CD4-positive, alpha-beta T cell (primary cell): ENCODE measurements at regions of chr6 and their contacts with region 1.

Region 1: GRCh38 chr6:116279260-116280063 is at the start of gene TSPYL1:
- DNase-seq: peak; percentile 89 to 98 (median 92)
- ATAC-seq: peak; percentile 84
- H3K4me3 ChIP-seq: peak within 1 kb of the TSS; percentile 76
- H3K4me3 Mint-ChIP-seq: peak within 1 kb of the TSS; percentile 96
- H3K27ac ChIP-seq: peak within 1 kb of the TSS; percentile 97 to 99
- H3K27ac Mint-ChIP-seq: peak within 1 kb of the TSS; percentile 95
- H3K4me1 ChIP-seq: peaks cover 41% of the 10 kb centered on the region
- H3K4me1 Mint-ChIP-seq: peaks cover 69% of the 10 kb centered on the region
- H3K27me3 ChIP-seq: no peaks in the 10 kb centered on the region
- H3K27me3 Mint-ChIP-seq: no peaks in the 10 kb centered on the region
- CTCF ChIP-seq: no peak
- total RNA-seq, gene TSPYL1: 225 to 226 TPM

Region 2: DNA sequence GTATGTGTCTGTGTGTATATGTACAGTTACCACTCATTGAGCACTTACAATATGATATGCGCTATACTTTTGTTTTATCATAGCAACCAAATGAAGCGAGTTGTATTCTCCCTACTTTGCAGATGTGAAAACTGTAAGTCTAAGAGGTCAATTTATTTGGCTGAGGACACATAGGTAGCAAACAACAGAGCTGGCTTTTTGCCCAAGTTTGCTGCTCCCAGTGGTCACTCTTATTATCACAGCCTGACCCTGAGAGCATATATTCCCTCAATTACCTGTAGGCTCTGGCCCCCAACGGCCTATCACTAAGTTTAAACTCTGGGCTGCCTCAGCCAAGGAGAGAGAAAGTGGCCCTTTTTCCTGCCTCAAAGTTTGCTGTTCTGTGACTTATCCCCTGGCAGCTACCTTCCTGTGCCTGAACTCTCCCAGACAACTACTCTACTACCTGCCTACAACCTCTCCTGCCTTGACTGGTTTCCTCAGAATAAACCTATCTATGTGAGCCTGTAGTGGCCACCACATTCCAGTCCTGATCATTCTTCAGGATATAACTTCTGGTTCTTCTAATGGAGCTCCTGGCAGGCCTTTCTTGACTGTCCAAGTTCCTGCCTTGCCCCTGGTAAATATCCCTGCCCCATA is 440.6 kb before region 1 on chr6:
- CTCF ChIA-PET with region 1: no interaction called
- POLR2A ChIA-PET with region 1: no interaction called
- intact Hi-C with region 1: no loop called
- DNase-seq: no peak
- ATAC-seq: no peak
- H3K4me3 ChIP-seq: no peak overlapping the region
- H3K4me3 Mint-ChIP-seq: no peak overlapping the region
- H3K27ac ChIP-seq: no peak overlapping the region
- H3K27ac Mint-ChIP-seq: no peak overlapping the region
- H3K4me1 ChIP-seq: no peaks in the 10 kb centered on the region
- H3K4me1 Mint-ChIP-seq: no peaks in the 10 kb centered on the region
- H3K27me3 ChIP-seq: no peaks in the 10 kb centered on the region
- H3K27me3 Mint-ChIP-seq: no peaks in the 10 kb centered on the region
- CTCF ChIP-seq: no peak

Region 3: GRCh38 chr6:116100419-116101301 is 178.8 kb before region 1 on chr6 and contains the start of gene NT5DC1:
- CTCF ChIA-PET with region 1: no interaction called
- POLR2A ChIA-PET with region 1: interaction called, 27 read pairs
- intact Hi-C with region 1: no loop called
- DNase-seq: peak; percentile 65 to 92 (median 82)
- ATAC-seq: peak; percentile 92
- H3K4me3 ChIP-seq: peak within 1 kb of the TSS; percentile 67
- H3K4me3 Mint-ChIP-seq: peak within 1 kb of the TSS; percentile 99
- H3K27ac ChIP-seq: peak within 1 kb of the TSS; percentile 69 to 75
- H3K27ac Mint-ChIP-seq: peak within 1 kb of the TSS; percentile 80
- H3K4me1 ChIP-seq: peaks cover 26% of the 10 kb centered on the region
- H3K4me1 Mint-ChIP-seq: peaks cover 58% of the 10 kb centered on the region
- H3K27me3 ChIP-seq: no peaks in the 10 kb centered on the region
- H3K27me3 Mint-ChIP-seq: no peaks in the 10 kb centered on the region
- CTCF ChIP-seq: peak; percentile 52
- total RNA-seq, gene NT5DC1: 24.2 to 27.2 TPM

Region 4: DNA sequence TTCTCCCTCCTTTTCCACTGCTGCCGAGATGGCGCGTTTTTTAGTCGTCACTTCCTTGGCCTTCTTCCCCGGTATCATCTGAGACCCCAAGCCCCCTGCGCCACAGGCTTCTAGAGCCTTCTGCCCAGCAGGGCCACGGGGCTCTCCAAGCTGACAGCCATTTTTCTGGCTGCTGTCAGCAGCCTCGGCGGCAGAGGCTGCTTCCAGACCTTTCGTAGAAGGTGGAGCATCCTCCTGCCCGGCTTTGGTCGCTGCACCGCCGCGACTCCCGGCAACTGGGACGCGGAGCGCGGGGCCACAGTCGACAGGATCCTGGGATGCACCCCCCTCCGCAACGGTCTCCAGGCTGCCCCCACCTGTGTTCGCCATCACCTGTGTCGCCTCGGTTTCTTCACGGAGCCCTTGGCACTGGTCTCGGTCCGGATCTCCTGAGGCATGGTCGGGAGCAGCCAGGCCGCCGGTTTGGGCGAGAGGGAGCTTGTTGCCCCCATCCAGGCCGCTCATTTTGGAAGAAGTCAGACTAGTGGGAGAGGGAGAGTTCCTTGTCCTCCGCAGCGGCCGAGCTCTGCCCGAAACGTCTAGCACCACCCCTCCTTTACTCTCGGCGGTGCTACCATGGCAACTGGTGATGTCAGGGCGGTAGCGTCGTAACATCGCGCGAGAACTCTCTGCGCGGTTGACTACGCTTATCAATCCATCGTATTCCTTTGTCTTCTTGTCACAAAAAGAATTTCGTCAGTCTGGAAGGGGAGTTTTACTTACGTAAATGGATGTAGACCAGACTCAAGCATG is 25.8 kb before region 1 on chr6 and contains the start of gene TSPYL4:
- CTCF ChIA-PET with region 1: no interaction called
- POLR2A ChIA-PET with region 1: interaction called, 122 read pairs
- intact Hi-C with region 1: loop called (anchors 1 kb)
- DNase-seq: peak; percentile 80 to 98 (median 88)
- ATAC-seq: peak; percentile 96
- H3K4me3 ChIP-seq: peak within 1 kb of the TSS; percentile 91
- H3K4me3 Mint-ChIP-seq: no peak within 1 kb of the TSS
- H3K27ac ChIP-seq: peak within 1 kb of the TSS; percentile 92 to 94
- H3K27ac Mint-ChIP-seq: no peak within 1 kb of the TSS
- H3K4me1 ChIP-seq: peaks cover 31% of the 10 kb centered on the region
- H3K4me1 Mint-ChIP-seq: peaks cover 6% of the 10 kb centered on the region
- H3K27me3 ChIP-seq: no peaks in the 10 kb centered on the region
- H3K27me3 Mint-ChIP-seq: no peaks in the 10 kb centered on the region
- CTCF ChIP-seq: no peak
- total RNA-seq, gene TSPYL4: 35.9 to 37.7 TPM

Region 5: DNA sequence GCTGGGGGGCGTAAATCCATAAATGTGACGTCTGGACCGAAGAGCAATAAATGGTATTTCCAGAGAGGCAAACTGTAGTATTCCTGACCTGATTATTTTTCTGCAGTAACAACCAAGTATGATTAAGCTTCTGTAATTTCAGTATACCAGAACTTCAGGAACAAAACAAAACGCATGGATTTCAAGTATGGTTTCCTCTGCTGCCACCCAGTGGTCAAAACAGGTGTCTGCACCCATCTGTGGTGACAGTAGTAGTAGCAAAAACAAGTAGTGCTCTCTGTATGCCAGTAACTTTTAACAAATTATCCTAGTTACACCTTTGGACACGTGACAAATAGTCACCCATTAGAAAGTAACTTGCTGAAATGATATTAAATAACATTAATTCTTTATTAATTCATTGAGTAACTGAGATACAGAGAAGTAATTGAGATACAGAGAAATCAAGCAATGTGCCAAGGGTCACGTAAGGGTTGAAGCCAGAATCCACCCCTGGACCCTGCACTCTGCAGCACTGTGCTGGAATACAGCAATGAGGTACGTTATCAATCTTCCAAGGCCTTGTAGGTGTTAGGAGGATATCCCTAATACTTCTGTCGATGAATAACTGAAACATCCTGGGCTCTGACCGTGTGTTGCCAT is 282.0 kb after region 1 on chr6:
- CTCF ChIA-PET with region 1: no interaction called
- POLR2A ChIA-PET with region 1: interaction called, 3 read pairs
- intact Hi-C with region 1: loop called in 1 of 2 experiments (anchors 5 kb)
- DNase-seq: peak; percentile 39 to 82 (median 55)
- ATAC-seq: peak; percentile 85
- H3K4me3 ChIP-seq: no peak overlapping the region
- H3K4me3 Mint-ChIP-seq: no peak overlapping the region
- H3K27ac ChIP-seq: no peak overlapping the region
- H3K27ac Mint-ChIP-seq: no peak overlapping the region
- H3K4me1 ChIP-seq: peaks cover 8% of the 10 kb centered on the region
- H3K4me1 Mint-ChIP-seq: no peaks in the 10 kb centered on the region
- H3K27me3 ChIP-seq: peaks cover 0 to 14% of the 10 kb centered on the region in 2 experiments
- H3K27me3 Mint-ChIP-seq: peaks cover 10% of the 10 kb centered on the region
- CTCF ChIP-seq: peak; percentile 98

Region 6: DNA sequence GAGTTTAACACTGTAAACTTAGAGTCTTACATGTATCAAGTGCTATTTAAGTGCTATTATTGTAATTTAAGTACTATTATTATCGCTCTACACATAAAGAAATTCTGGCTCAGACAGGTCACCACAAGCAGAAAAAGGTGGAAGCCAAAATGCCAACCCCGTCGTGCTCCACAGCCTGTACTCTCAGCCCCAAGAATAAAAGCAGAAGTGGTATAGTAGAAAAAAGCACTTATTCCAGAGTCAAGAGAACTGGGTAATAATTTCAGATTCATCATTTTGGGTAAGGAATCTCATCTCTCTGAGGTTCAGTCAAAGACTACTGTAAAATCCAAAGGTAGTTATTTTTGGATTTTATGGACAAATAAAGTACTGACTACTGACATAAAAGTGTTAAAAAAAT is 388.2 kb after region 1 on chr6:
- CTCF ChIA-PET with region 1: no interaction called
- POLR2A ChIA-PET with region 1: interaction called, 13 read pairs
- intact Hi-C with region 1: no loop called
- DNase-seq: peak in 1 of 14 experiments; percentile 22
- ATAC-seq: no peak
- H3K4me3 ChIP-seq: peak overlapping the region; percentile 74
- H3K4me3 Mint-ChIP-seq: peak overlapping the region; percentile 97
- H3K27ac ChIP-seq: no peak overlapping the region
- H3K27ac Mint-ChIP-seq: peak overlapping the region; percentile 96
- H3K4me1 ChIP-seq: peaks cover 21% of the 10 kb centered on the region
- H3K4me1 Mint-ChIP-seq: peaks cover 50% of the 10 kb centered on the region
- H3K27me3 ChIP-seq: no peaks in the 10 kb centered on the region
- H3K27me3 Mint-ChIP-seq: no peaks in the 10 kb centered on the region
- CTCF ChIP-seq: no peak